ENCODE measurements at regions of chr5 and their contacts with region 1.

Region 1: GRCh38 chr5:40202814-40203440 is 476.8 kb upstream of the PTGER4 start:
- DNase-seq: no peak

Region 2: DNA sequence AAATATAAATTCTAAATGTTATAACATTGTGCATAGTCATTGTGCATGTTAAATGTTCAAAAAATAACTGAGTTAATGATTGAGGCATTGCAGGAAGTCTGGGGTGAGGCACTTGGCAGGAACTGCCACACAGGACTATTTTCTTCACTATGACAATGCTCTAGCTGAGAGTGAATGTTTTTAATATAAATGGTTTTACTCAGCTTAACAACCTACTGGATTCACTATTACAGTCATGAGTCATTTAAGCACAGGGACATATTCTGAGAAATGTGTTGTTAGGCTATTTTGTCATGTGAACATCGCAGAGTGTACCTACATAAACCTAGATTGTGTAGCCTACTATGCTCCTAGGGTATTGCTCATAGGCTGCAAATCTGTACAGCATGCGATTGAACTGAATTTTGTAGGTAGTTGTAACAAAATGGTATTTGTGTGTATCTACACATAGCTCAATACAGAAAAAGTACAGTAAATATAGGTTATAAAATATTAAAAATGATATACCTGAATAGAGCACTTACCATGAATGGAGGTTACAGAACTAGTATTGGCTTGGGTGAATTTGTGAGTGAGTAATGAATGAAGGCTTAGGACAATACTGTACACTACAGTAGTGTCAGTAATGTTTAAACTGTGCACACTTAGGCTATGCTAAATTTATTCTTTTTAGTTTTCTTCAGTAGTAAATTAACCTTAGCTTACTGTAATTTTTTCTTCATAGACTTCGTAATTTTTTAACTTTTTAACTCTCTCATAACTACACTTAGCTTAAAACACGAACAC is 130.7 kb after region 1 on chr5:
- intact Hi-C with region 1: loop called (anchors 5 kb)
- DNase-seq: no peak

Region 3: DNA sequence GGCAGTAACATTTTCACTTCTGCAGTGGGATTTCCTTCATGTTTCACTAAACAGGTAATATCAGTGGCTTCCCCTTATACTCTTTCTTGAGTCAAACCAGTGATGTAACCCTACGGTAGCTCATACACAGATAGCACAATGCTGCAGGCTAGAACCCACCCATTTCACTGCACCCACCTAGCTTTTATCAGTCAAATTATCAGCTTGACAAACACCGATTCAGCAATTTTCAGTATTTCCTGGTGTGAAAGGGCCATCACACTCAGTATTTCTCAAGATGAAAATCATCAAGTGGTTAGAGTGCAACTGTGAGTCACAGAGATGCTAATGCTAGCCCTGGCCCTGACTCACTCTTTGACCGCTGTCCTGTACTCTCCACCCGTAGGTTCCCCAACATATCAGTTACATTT is 234.5 kb after region 1 on chr5:
- intact Hi-C with region 1: loop called (anchors 10 kb)
- DNase-seq: no peak